AG04450 (cell line): ENCODE measurements at regions of chr7 and their contacts with region 1.

Region 1: GRCh38 chr7:100190048-100190711 is 12.5 kb downstream of the STAG3 start:
- DNase-seq: peak; percentile 24
- H3K4me3 ChIP-seq: no peak overlapping the region
- H3K27ac ChIP-seq: no peak overlapping the region
- H3K27me3 ChIP-seq: no peaks in the 10 kb centered on the region
- CTCF ChIP-seq: peak; percentile 58

Region 2: DNA sequence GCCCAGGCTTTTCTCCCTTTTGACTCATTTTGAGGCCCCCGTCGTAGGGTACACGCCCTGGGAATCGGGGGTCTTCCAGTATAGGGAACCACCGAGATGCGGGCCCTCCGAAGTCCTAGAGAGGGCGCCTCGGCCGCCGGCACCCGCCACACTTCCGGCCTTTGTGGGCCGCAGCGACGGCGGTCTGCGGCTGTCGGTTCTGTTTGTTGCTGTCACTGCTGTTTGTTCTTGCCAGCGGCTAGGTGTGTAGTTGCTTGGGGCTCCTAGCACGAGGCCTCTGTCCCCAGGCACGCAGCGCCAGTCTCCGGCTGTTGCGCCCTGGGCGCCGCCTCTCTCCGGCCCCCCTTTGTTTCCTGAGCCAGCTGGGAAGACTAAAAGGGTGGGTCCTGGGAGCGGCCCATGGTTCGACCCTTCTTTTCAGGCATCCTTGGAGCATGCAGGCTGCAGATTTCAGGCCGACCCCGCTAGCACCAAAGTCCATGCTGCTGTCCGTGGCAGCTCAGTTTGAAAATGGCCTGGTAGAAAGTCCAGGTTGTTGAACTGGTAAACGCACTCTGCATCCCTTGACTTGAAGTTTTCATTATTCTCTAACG is 192.5 kb before region 1 on chr7:
- CTCF ChIA-PET with region 1: no interaction called
- POLR2A ChIA-PET with region 1: no interaction called
- DNase-seq: no peak
- H3K4me3 ChIP-seq: peak overlapping the region; percentile 39
- H3K27ac ChIP-seq: no peak overlapping the region
- H3K27me3 ChIP-seq: no peaks in the 10 kb centered on the region
- CTCF ChIP-seq: peak; percentile 23; the same call in 1 of the 2 replicates

Region 3: GRCh38 chr7:100177045-100178001 is 12.9 kb before region 1 on chr7 and contains the starts of genes GPC2 and STAG3:
- CTCF ChIA-PET with region 1: interaction called, 20 read pairs
- POLR2A ChIA-PET with region 1: no interaction called
- DNase-seq: peak; percentile 91
- H3K4me3 ChIP-seq: peak within 1 kb of the TSS; percentile 92
- H3K27ac ChIP-seq: no peak within 1 kb of the TSS
- H3K27me3 ChIP-seq: no peaks in the 10 kb centered on the region
- CTCF ChIP-seq: no peak
- polyA plus RNA-seq, gene GPC2: 2.6 TPM in 2 replicates
- polyA plus RNA-seq, gene STAG3: 0.15 and 0.22 TPM in 2 replicates

Region 4: DNA sequence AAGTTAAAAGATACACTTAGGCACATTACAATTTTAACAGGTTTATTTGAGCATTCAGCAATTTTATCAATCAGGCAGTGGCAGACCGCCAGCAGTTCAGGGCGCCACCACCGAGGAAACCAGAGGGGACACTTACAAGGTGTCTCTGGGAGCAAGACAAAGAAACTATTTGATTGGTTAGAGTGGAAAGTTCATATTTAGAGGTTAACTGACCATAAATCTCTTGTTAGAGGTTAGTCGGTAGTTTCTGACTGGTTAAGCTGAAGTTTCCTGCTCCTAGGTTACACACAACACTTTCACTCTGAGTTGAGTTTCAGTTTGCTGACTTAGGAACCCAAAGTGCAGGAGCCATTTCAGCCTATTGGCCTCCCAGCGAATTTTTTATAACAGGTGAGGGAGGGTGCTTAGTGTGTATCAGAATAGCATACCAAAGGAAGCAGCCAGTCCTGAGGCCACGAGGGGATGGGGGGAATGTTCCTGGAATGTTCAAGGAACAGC is 18.8 kb after region 1 on chr7:
- CTCF ChIA-PET with region 1: interaction called, 22 read pairs
- POLR2A ChIA-PET with region 1: interaction called, 3 read pairs
- DNase-seq: no peak
- H3K4me3 ChIP-seq: no peak overlapping the region
- H3K27ac ChIP-seq: no peak overlapping the region
- H3K27me3 ChIP-seq: peaks cover 12% of the 10 kb centered on the region
- CTCF ChIP-seq: no peak

Region 5: GRCh38 chr7:100247152-100247757 is 57.1 kb after region 1 on chr7:
- CTCF ChIA-PET with region 1: interaction called, 11 read pairs
- POLR2A ChIA-PET with region 1: no interaction called
- DNase-seq: peak; percentile 61
- H3K4me3 ChIP-seq: no peak overlapping the region
- H3K27ac ChIP-seq: peak overlapping the region; percentile 52
- H3K27me3 ChIP-seq: no peaks in the 10 kb centered on the region
- CTCF ChIP-seq: no peak